ENCODE measurements at regions of chr12 and their contacts with region 1.

Region 1: DNA sequence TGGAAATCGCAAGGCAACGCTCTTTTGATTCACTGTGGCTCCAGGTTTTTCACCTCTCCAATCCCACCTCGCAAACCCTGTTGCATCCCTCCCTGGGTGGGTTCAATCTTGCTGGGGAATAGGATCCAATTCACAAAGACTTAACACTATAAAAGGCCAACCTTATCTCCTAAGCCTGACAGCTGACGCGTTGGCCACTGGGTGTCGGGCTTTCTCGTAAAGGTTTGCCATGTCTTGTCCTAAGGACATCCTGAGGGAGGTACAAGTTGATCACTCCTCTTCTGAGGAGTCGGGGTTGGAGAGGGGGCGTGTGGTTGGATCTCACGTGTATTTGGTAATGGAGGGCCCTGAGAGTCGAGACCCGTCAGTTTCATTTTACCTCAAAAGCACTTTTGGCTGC is 112.6 kb upstream of the FZD10 start:
- DNase-seq: no peak
- ATAC-seq: no peak
- H3K4me3 ChIP-seq: no peak overlapping the region
- H3K4me3 Mint-ChIP-seq: no peak overlapping the region
- H3K27ac ChIP-seq: no peak overlapping the region
- H3K27ac Mint-ChIP-seq: no peak overlapping the region
- H3K4me1 ChIP-seq: peaks cover 0 to 4% of the 10 kb centered on the region in 2 donors
- H3K4me1 Mint-ChIP-seq: peaks cover 0 to 5% (median 3%) of the 10 kb centered on the region in 7 donors
- H3K27me3 ChIP-seq: peaks cover 0 to 4% of the 10 kb centered on the region in 2 donors
- H3K27me3 Mint-ChIP-seq: peaks cover 21 to 47% (median 35%) of the 10 kb centered on the region in 5 donors

Region 2: GRCh38 chr12:130013771-130014484 is 35.7 kb before region 1 on chr12:
- CTCF ChIA-PET with region 1: no interaction called
- POLR2A ChIA-PET with region 1: no interaction called
- intact Hi-C with region 1: no loop called
- DNase-seq: peak in 6 of 9 donors; percentile 2 to 46 (median 16)
- ATAC-seq: peak; percentile 42
- H3K4me3 ChIP-seq: no peak overlapping the region
- H3K4me3 Mint-ChIP-seq: no peak overlapping the region
- H3K27ac ChIP-seq: no peak overlapping the region
- H3K27ac Mint-ChIP-seq: no peak overlapping the region
- H3K4me1 ChIP-seq: no peaks in the 10 kb centered on the region
- H3K4me1 Mint-ChIP-seq: no peaks in the 10 kb centered on the region
- H3K27me3 ChIP-seq: no peaks in the 10 kb centered on the region
- H3K27me3 Mint-ChIP-seq: peaks cover 4 to 25% (median 6%) of the 10 kb centered on the region in 5 donors

Region 3: DNA sequence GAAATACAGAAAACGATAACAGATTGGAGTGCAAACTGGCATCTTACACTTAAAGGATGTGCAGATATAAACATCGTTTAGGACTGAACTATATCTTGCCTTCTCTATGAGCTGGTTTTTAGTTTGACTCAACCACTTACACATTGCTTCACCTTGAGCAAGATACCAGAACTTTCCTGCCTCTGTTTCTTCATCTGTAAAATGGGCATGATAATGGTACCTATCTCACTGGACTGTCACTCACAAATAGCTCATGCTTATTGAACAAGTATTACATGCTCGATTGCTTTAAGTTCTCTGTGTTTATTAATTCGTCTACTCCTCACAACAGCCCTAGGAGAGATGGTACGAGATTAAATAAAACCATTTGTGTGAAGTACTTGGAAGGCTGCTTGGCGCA is 120.3 kb after region 1 on chr12:
- CTCF ChIA-PET with region 1: interaction called, 3 read pairs
- POLR2A ChIA-PET with region 1: no interaction called
- intact Hi-C with region 1: loop called in 1 of 2 experiments (anchors 2 kb)
- DNase-seq: no peak
- ATAC-seq: no peak
- H3K4me3 ChIP-seq: no peak overlapping the region
- H3K4me3 Mint-ChIP-seq: no peak overlapping the region
- H3K27ac ChIP-seq: no peak overlapping the region
- H3K27ac Mint-ChIP-seq: no peak overlapping the region
- H3K4me1 ChIP-seq: no peaks in the 10 kb centered on the region
- H3K4me1 Mint-ChIP-seq: peaks cover 0 to 8% (median 0%) of the 10 kb centered on the region in 7 donors
- H3K27me3 ChIP-seq: no peaks in the 10 kb centered on the region
- H3K27me3 Mint-ChIP-seq: peaks cover 49 to 78% (median 72%) of the 10 kb centered on the region in 5 donors